ENCODE measurements at regions of chr5 and their contacts with region 1.

Region 1: DNA sequence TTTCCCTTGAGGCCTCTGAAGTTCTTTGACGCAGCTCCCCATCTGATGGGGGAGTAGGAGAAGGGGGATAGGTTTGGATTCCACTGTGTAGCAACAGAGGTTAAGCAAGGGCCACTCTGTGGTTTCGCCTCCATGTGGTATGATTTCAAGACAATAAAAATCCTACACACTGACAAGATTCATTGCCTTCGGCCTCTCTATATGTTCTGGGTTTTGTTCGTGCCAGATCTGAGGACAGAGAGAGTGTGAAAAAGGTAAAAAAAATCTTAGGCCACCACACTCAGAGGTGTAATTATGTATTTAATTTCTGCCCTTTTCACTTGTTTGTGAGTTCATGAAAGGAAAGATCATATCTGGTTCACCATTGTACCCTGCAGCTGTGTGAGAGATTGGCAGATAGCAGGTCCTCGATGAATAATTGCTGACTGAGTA is 715.2 kb upstream of the ZNF608 start:
- DNase-seq: no peak
- H3K4me3 ChIP-seq: no peak overlapping the region
- H3K27ac ChIP-seq: no peak overlapping the region
- H3K4me1 ChIP-seq: no peaks in the 10 kb centered on the region
- H3K27me3 ChIP-seq: no peaks in the 10 kb centered on the region
- CTCF ChIP-seq: no peak
- EP300 ChIP-seq: no peak
- POLR2A ChIP-seq: no peak

Region 2: DNA sequence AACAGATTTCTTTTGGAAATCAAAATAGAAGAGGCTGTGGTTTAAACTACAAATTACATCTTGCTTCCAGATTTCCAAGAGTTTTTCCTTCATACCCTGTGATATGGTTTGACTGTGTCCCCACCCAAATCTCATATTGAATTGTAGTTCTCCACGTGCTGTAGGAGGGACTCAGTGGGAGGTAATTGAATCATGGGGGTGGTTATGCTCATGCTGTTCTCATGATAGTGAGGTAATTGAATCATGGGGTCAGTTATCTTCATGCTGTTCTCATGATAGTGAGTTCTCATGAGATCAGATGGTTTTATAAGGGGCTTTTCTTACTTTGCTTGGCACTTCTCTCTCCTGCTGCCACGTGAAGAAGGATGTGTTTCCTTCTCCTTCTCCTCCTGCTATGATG is 28.2 kb before region 1 on chr5:
- in situ Hi-C with region 1: no loop called
- intact Hi-C with region 1: loop called (anchors 1 kb)
- DNase-seq: no peak
- H3K4me3 ChIP-seq: no peak overlapping the region
- H3K27ac ChIP-seq: no peak overlapping the region
- H3K4me1 ChIP-seq: no peaks in the 10 kb centered on the region
- H3K27me3 ChIP-seq: no peaks in the 10 kb centered on the region
- CTCF ChIP-seq: no peak
- EP300 ChIP-seq: no peak
- POLR2A ChIP-seq: no peak

Region 3: GRCh38 chr5:125526942-125527341 is 65.3 kb after region 1 on chr5:
- in situ Hi-C with region 1: no loop called
- intact Hi-C with region 1: no loop called
- DNase-seq: no peak
- H3K4me3 ChIP-seq: no peak overlapping the region
- H3K27ac ChIP-seq: no peak overlapping the region
- H3K4me1 ChIP-seq: peaks cover 0 to 13% (median 2%) of the 10 kb centered on the region in 4 donors
- H3K27me3 ChIP-seq: no peaks in the 10 kb centered on the region
- CTCF ChIP-seq: no peak
- EP300 ChIP-seq: no peak
- POLR2A ChIP-seq: no peak

Region 4: GRCh38 chr5:125587631-125588030 is 126.0 kb after region 1 on chr5:
- in situ Hi-C with region 1: no loop called
- intact Hi-C with region 1: no loop called
- DNase-seq: no peak
- H3K4me3 ChIP-seq: no peak overlapping the region
- H3K27ac ChIP-seq: no peak overlapping the region
- H3K4me1 ChIP-seq: peaks cover 0 to 8% (median 3%) of the 10 kb centered on the region in 4 donors
- H3K27me3 ChIP-seq: no peaks in the 10 kb centered on the region
- CTCF ChIP-seq: no peak
- EP300 ChIP-seq: no peak
- POLR2A ChIP-seq: no peak

Measured in transverse colon (tissue), 4 donors.